Endothelial cell of umbilical vein (primary cell): ENCODE measurements at regions of chr6 and their contacts with region 1.

Region 1: DNA sequence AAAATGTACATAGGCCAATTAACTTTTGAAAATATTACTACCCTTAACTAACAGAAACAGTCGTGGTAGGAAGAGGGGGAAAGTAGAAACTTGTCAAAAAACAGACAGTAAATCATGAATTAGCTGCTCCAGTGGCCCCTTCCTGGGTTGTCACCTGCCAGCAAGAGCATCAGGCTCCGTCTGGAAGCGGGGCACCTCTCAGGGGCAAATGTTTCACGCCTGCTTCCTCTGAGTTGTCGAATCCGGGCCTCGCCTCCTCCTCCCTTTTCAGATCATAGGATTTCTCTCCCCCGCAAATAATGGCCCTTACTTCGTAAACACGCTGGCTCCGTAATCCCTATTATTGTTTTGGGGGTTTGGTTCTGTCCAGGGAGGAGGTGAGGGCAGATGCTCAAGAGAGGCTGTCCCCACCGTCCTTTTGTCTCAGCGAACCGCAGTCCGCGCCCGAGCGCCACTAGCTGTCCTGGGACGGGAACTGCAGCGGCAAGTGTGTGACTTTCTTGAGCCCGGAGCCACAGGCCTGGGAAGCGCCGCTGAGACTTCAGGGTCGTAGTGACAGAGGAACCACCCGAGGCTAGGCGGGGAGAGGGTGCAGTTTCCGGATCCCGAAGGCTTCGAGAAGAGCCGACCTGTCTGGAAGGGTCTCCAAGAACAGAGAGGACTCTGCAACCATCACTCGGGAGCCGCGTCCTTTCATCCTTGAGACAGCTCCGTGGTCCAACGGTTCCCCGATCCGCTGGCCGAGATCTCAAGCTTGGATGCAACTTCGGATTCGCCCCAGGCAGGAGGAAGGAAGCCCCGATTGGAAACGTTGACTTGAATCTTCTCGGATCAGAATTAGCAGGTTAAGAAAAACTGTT is 214.5 kb upstream of the ZNF184 start:
- DNase-seq: peak; percentile 75
- H3K4me3 ChIP-seq: peak overlapping the region; percentile 33 to 77 (median 62)
- H3K27ac ChIP-seq: no peak overlapping the region
- H3K4me1 ChIP-seq: peaks cover 3% of the 10 kb centered on the region
- H3K27me3 ChIP-seq: peaks cover 0 to 2% of the 10 kb centered on the region in 2 experiments
- CTCF ChIP-seq: peak; percentile 57 to 75
- POLR2A ChIP-seq: no peak

Region 2: DNA sequence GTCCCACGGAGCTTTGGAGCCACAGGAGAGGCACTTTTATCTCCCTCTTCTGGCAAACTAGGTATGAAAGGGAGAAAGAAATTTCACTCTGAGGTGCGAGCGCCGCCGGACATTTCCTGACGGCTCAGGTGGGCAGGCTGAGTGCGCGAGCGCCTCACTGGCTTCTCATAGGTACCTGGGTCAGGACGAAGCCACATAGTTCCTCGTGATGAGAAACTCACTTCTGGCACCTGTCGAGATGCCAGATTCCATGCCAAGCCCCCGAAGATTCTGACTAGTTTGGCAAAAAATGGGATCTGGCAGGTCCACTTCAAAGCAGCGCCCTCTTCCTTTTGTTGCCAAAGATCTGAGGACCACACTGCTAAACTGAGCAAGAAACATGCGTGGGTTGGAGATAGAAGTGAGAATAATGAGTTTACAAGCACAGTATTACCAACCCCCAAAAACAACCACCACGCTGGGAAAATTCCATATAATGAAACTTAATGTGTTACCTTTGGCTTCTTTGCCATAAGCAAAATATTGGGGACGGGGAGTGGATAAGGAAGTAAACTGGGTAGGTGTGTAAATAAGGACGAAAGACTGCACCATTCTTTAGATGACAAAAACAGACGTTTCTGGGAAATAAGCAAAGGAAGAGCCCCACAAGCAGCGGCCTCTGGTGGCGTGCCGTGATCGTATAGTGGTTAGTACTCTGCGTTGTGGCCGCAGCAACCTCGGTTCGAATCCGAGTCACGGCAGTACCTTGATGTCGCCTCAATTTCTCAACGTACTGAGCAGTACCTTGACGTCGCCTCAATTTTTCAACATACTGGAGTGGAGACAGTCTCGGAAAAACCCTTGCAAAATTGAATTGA is 529.7 kb before region 1 on chr6:
- CTCF ChIA-PET with region 1: no interaction called
- POLR2A ChIA-PET with region 1: no interaction called
- dilution Hi-C with region 1: no loop called
- intact Hi-C with region 1: loop called (anchors 1 kb)
- DNase-seq: peak; percentile 57
- H3K4me3 ChIP-seq: peak overlapping the region; percentile 30 to 64 (median 59)
- H3K27ac ChIP-seq: no peak overlapping the region
- H3K4me1 ChIP-seq: peaks cover 10% of the 10 kb centered on the region
- H3K27me3 ChIP-seq: peaks cover 8 to 11% of the 10 kb centered on the region in 2 experiments
- CTCF ChIP-seq: peak; percentile 42 to 63
- POLR2A ChIP-seq: no peak

Region 3: GRCh38 chr6:27312146-27312949 is 375.0 kb before region 1 on chr6 and contains the start of gene POM121L2:
- CTCF ChIA-PET with region 1: interaction called, 5 read pairs
- POLR2A ChIA-PET with region 1: no interaction called
- dilution Hi-C with region 1: no loop called
- intact Hi-C with region 1: loop called (anchors 1 kb)
- DNase-seq: peak; percentile 65
- H3K4me3 ChIP-seq: peak within 1 kb of the TSS; percentile 41 to 60 (median 51)
- H3K27ac ChIP-seq: no peak within 1 kb of the TSS
- H3K4me1 ChIP-seq: peaks cover 9% of the 10 kb centered on the region
- H3K27me3 ChIP-seq: peaks cover 14 to 20% of the 10 kb centered on the region in 2 experiments
- CTCF ChIP-seq: peak; percentile 50 to 69
- POLR2A ChIP-seq: no peak
- total RNA-seq, gene POM121L2: not detected in 2 replicates

Region 4: GRCh38 chr6:27503436-27504030 is 183.9 kb before region 1 on chr6:
- CTCF ChIA-PET with region 1: interaction called, 5 read pairs
- POLR2A ChIA-PET with region 1: no interaction called
- dilution Hi-C with region 1: no loop called
- intact Hi-C with region 1: loop called (anchors 5 kb)
- DNase-seq: peak; percentile 83
- H3K4me3 ChIP-seq: peak overlapping the region; percentile 38 to 97 (median 95)
- H3K27ac ChIP-seq: peak overlapping the region; percentile 15
- H3K4me1 ChIP-seq: peaks cover 14% of the 10 kb centered on the region
- H3K27me3 ChIP-seq: peaks cover 5 to 11% of the 10 kb centered on the region in 2 experiments
- CTCF ChIP-seq: no peak
- POLR2A ChIP-seq: no peak

Region 5: GRCh38 chr6:27617700-27618689 is 69.4 kb before region 1 on chr6:
- CTCF ChIA-PET with region 1: interaction called, 4 read pairs
- POLR2A ChIA-PET with region 1: no interaction called
- dilution Hi-C with region 1: no loop called
- intact Hi-C with region 1: loop called (anchors 5 kb)
- DNase-seq: peak; percentile 40
- H3K4me3 ChIP-seq: peak overlapping the region; percentile 20 to 68 (median 55)
- H3K27ac ChIP-seq: no peak overlapping the region
- H3K4me1 ChIP-seq: peaks cover 7% of the 10 kb centered on the region
- H3K27me3 ChIP-seq: peaks cover 0 to 7% of the 10 kb centered on the region in 2 experiments
- CTCF ChIP-seq: no peak
- POLR2A ChIP-seq: no peak

Region 6: GRCh38 chr6:27902335-27903314 is 215.2 kb after region 1 on chr6:
- CTCF ChIA-PET with region 1: no interaction called
- POLR2A ChIA-PET with region 1: no interaction called
- dilution Hi-C with region 1: no loop called
- intact Hi-C with region 1: loop called (anchors 1 kb)
- DNase-seq: peak; percentile 92
- H3K4me3 ChIP-seq: peak overlapping the region; percentile 39 to 91 (median 86)
- H3K27ac ChIP-seq: peak overlapping the region; percentile 37
- H3K4me1 ChIP-seq: no peaks in the 10 kb centered on the region
- H3K27me3 ChIP-seq: peaks cover 0 to 11% of the 10 kb centered on the region in 2 experiments
- CTCF ChIP-seq: no peak
- POLR2A ChIP-seq: no peak